PC-3 (cell line): ENCODE measurements at regions of chr5 and their contacts with region 1.

Region 1: GRCh38 chr5:41009232-41009631 is 61.9 kb downstream of the MROH2B start:
- DNase-seq: peak; percentile 99
- ATAC-seq: peak; percentile 96
- H3K4me3 ChIP-seq: no peak overlapping the region
- H3K27ac ChIP-seq: peak overlapping the region; percentile 56
- H3K4me1 ChIP-seq: peaks cover 21% of the 10 kb centered on the region
- H3K27me3 ChIP-seq: no peaks in the 10 kb centered on the region
- CTCF ChIP-seq: no peak

Region 2: GRCh38 chr5:40694433-40694832 is 314.8 kb before region 1 on chr5:
- CTCF ChIA-PET with region 1: no interaction called
- POLR2A ChIA-PET with region 1: no interaction called
- intact Hi-C with region 1: no loop called
- DNase-seq: no peak
- ATAC-seq: no peak
- H3K4me3 ChIP-seq: no peak overlapping the region
- H3K27ac ChIP-seq: no peak overlapping the region
- H3K4me1 ChIP-seq: peaks cover 11% of the 10 kb centered on the region
- H3K27me3 ChIP-seq: no peaks in the 10 kb centered on the region
- CTCF ChIP-seq: no peak

Region 3: GRCh38 chr5:41071975-41072374 is 62.7 kb after region 1 on chr5:
- CTCF ChIA-PET with region 1: no interaction called
- POLR2A ChIA-PET with region 1: no interaction called
- intact Hi-C with region 1: loop called (anchors 1 kb)
- DNase-seq: peak; percentile 91
- ATAC-seq: peak; percentile 100
- H3K4me3 ChIP-seq: no peak overlapping the region
- H3K27ac ChIP-seq: no peak overlapping the region
- H3K4me1 ChIP-seq: peaks cover 12% of the 10 kb centered on the region
- H3K27me3 ChIP-seq: no peaks in the 10 kb centered on the region
- CTCF ChIP-seq: no peak